Thyroid gland (tissue), 4 donors: ENCODE measurements at regions of chr19 and their contacts with region 1.

Region 1: GRCh38 chr19:4123615-4124568 is at the start of gene MAP2K2:
- DNase-seq: peak; percentile 90 to 95
- H3K4me3 ChIP-seq: peak within 1 kb of the TSS; percentile 33 to 73 (median 68)
- H3K27ac ChIP-seq: peak within 1 kb of the TSS in 2 of 3 donors; percentile 50 to 71
- H3K4me1 ChIP-seq: peaks cover 16 to 22% of the 10 kb centered on the region in 2 donors
- H3K27me3 ChIP-seq: no peaks in the 10 kb centered on the region
- CTCF ChIP-seq: peak in 2 of 6 experiments; percentile 4 to 25
- POLR2A ChIP-seq: peak in 1 of 2 donors; percentile 73
- total RNA-seq, gene MAP2K2: 59.4 to 95.3 (median 81.8) TPM

Region 2: DNA sequence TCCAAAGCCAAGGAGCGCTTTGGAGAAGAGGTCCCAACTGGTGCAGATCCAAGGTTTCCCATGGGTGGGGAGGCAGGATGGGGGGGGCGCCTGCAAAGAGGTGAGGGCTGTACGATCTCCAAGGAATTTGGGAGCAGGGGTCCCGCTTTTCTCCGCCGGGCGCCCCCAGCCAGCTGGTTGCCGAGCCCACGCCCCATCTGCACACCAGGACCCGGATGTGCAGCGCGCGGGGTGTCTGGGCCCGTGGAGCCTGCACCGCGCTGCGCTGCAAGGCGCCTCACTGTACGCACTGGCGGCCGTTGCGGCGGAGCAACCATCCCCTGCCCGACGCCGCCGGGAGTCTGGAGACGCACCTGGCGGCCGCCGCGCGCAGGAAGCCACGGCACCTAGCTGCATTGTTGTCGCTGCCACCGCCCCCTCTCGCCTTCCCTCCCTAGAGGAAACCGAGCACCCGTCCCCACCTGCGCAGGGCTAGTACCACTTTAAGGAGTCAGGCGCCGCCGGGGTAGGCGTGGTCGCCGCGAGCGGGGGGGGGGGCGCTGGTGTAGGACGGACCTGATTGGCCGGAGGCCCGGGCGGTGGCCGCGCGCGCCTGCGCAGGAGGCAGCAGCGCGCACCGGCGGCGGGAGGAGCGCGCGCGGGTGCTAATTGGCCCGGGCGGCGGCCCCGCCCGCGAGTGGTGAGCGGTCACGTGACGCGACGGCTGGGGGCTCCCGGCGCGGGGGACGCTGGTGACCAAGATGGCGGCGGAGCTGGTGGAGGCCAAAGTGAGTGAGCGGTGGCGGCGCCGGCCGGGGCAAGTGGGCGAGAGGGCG is 116.7 kb before region 1 on chr19 and contains the start of gene PIAS4:
- intact Hi-C with region 1: loop called (anchors 10 kb)
- DNase-seq: peak; percentile 96 to 97
- H3K4me3 ChIP-seq: peak within 1 kb of the TSS; percentile 63 to 98 (median 81)
- H3K27ac ChIP-seq: peak within 1 kb of the TSS; percentile 78 to 84 (median 79)
- H3K4me1 ChIP-seq: peaks cover 13 to 25% of the 10 kb centered on the region in 2 donors
- H3K27me3 ChIP-seq: no peaks in the 10 kb centered on the region
- CTCF ChIP-seq: peak in 2 of 6 experiments; percentile 6 to 23
- POLR2A ChIP-seq: peak in 1 of 2 donors; percentile 59
- total RNA-seq, gene PIAS4: 14.7 to 32.3 (median 16.0) TPM

Region 3: GRCh38 chr19:4065430-4066175 is 58.3 kb before region 1 on chr19:
- intact Hi-C with region 1: loop called (anchors 5 kb)
- DNase-seq: peak; percentile 97 to 98
- H3K4me3 ChIP-seq: peak overlapping the region in 1 of 3 donors; percentile 93
- H3K27ac ChIP-seq: peak overlapping the region; percentile 91 to 98 (median 91)
- H3K4me1 ChIP-seq: peaks cover 39 to 43% of the 10 kb centered on the region in 2 donors
- H3K27me3 ChIP-seq: no peaks in the 10 kb centered on the region
- CTCF ChIP-seq: no peak
- POLR2A ChIP-seq: no peak

Region 4: DNA sequence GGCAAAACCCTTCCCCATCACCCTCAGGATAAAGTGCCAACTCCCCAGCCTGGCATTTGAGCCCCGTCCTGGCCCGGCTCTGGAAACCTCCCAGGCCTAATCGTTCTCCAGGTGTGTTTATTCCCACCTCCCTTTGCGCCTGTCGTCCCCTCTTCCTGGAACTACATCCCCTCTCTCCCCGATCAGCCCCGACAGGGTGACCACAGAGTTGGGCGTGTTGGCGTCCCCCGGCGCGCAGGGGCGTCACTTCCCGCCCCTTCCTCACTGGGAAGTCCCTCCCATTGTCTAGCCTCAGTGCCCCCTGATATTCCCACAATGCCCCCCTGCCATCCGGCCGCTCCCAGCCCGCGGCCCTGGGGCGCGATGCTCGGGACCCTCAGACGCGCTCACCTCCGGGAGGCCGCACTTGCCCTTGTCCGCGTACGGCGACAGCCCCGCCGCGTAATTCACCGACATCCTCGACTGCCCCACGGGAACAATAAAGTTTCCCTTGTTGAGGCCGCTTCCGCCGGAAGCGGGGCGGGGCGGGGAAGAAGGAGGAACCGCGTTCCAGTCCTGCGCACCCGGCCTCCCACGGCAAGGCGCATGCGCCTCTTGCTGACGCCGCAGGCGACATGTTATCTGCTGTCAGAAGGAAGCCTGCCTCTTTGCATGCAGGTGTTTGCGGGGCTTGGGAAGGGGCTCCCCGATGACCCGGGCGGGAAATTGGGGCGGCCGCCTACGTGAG is 58.4 kb after region 1 on chr19 and contains the starts of genes ANKRD24 and SIRT6:
- intact Hi-C with region 1: loop called (anchors 5 kb)
- DNase-seq: peak; percentile 96
- H3K4me3 ChIP-seq: peak within 1 kb of the TSS; percentile 84 to 97 (median 88)
- H3K27ac ChIP-seq: peak within 1 kb of the TSS; percentile 4 to 77 (median 57)
- H3K4me1 ChIP-seq: peaks cover 15 to 16% of the 10 kb centered on the region in 2 donors
- H3K27me3 ChIP-seq: no peaks in the 10 kb centered on the region
- CTCF ChIP-seq: no peak
- POLR2A ChIP-seq: peak in 1 of 2 donors; percentile 69
- total RNA-seq, gene ANKRD24: 0.54 to 1.2 (median 0.77) TPM
- total RNA-seq, gene SIRT6: 11.9 to 39.3 (median 20.0) TPM